Psoas muscle (tissue), 8 donors: ENCODE measurements at regions of chr12 and their contacts with region 1.

Region 1: DNA sequence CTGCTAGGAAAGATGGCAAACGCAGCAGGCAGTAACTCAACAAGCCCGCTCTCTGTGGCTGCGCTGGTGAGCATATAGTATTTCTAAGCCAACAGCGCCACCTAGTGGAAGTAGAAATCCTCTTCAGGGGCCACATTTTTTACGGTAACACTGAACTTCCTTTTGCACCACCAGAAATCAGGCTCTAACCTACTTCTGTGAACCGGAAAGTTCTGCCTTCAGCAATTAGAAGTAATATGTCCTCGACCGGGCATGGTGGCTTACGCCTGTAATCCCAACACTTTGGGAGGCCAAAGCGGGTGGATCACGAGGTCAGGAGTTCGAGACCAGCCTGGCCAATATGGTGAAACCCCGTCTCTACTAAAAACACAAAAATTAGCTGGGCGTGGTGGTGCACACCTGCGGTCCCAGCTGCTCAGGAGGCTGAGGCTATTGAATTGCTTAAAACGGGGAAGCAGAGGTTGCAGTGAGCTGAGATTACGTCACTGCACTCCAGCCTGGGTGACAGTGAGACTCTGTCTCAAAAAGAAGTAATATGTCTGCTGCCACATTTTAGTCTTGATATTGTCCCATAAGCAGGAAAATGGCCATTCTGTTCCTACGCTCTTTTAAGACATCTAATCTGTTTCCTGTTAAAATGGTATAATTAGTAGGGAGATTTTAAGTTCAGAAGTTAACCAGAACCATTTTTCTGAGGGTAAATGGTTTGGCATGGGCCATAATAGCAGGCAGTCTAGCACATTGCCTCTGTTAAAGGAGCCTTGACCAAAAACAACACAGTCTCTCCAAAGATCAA is 26.8 kb downstream of the APOBEC1 start:
- DNase-seq: peak; percentile 53 to 77
- ATAC-seq: peak; percentile 85 to 97 (median 86)
- H3K4me3 ChIP-seq: no peak overlapping the region
- H3K27ac ChIP-seq: no peak overlapping the region
- H3K4me1 ChIP-seq: no peaks in the 10 kb centered on the region
- H3K27me3 ChIP-seq: peaks cover under 1 to 9% (median 2%) of the 10 kb centered on the region in 3 donors
- CTCF ChIP-seq: peak; percentile 86

Region 2: GRCh38 chr12:7142056-7142644 is 496.8 kb before region 1 on chr12:
- intact Hi-C with region 1: loop called in 1 of 2 experiments (anchors 10 kb)
- DNase-seq: no peak
- ATAC-seq: peak in 2 of 4 donors; percentile 76
- H3K4me3 ChIP-seq: no peak overlapping the region
- H3K27ac ChIP-seq: no peak overlapping the region
- H3K4me1 ChIP-seq: no peaks in the 10 kb centered on the region
- H3K27me3 ChIP-seq: no peaks in the 10 kb centered on the region
- CTCF ChIP-seq: peak; percentile 65

Region 3: GRCh38 chr12:7219599-7220243 is 419.2 kb before region 1 on chr12:
- intact Hi-C with region 1: loop called (anchors 1 to 2 kb)
- DNase-seq: peak; percentile 48 to 69
- ATAC-seq: peak; percentile 36 to 77 (median 53)
- H3K4me3 ChIP-seq: no peak overlapping the region
- H3K27ac ChIP-seq: no peak overlapping the region
- H3K4me1 ChIP-seq: no peaks in the 10 kb centered on the region
- H3K27me3 ChIP-seq: no peaks in the 10 kb centered on the region
- CTCF ChIP-seq: peak; percentile 80